Aorta (tissue), 5 donors: ENCODE measurements at regions of chr4 and their contacts with region 1.

Region 1: DNA sequence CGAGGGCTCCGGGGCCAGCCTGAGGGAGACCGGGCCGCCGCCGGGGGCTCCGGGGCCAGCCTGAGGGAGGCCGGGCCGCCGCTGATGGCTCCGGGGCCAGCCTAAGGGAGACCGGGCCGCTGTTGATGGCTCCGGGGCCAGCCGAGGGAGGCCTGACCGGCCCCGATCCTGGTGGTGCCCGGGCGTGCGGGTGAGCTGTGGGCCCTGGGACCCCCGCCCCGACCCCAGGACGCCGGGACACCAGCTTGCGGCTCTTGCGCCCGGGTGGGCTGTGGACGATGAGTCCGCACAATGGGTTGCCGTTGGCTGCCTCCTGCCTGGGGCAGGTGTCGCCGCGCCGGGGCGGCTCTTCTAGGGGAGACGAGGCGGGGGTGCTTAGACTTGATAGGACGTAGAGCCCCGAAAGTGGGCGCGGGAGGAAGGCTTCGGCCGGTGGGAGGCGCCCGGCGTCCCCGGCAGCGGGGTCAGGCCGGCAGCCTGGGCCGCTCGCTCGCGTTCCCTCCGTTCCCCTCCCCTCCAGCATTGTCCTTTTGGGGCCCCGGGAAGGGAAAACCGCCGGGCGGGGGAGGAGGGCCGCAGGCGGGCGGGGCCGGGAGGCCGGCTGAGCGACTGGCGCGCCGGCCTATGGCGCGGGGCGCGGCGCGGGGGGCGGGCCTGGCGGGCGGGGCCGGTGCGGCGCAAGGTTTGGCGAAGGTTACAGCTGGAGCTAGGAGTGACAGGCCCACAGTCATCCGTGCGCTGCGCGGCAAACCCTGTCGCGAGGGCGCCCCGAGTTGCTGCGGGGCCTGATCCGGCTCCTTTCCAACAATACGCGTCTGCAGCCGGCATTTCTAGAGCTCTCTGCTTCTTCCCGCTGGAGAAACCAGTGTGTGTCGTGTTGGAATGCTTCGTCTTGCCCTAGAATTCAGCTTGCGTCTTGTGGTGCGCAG is 790 bp downstream of the KIAA0232 start:
- DNase-seq: peak; percentile 92 to 96
- ATAC-seq: peak; percentile 94
- H3K4me3 ChIP-seq: peak overlapping the region; percentile 90 to 96
- H3K27ac ChIP-seq: peak overlapping the region; percentile 98 to 99
- H3K4me1 ChIP-seq: no peaks in the 10 kb centered on the region
- H3K27me3 ChIP-seq: no peaks in the 10 kb centered on the region

Region 2: DNA sequence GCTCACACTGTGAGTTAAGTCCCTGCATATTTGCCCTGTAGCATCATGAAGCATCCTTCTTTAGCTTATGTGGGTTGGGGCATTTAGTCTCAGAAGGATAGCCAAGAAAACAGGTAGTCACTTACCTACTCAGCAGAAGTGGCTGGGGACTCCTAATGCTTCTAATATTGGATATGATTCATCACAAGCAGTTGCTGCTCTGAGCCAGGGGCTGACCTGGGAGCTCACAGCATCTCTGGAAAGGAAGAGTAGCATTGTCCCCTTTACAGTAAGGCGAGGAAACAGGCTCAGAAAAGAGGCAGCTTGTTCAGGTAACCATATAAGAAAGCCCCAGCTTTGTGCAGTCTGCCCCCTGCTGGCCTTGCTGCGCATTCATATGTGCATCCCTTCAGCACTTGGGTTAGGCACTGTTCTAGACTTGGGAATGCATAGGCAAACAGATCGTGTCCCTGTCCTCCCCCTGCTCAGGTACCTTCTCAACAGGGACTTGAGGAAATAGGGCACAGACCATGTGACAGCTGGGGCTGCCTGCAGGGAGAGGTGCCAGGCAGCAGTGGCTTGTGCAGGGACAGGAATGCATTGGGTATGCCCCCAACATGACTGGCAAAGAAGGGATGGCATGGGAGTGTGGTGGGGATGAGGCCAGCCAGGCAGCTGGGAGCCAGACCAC is 90.6 kb after region 1 on chr4:
- intact Hi-C with region 1: loop called in 1 of 2 experiments (anchors 5 kb)
- DNase-seq: peak; percentile 82 to 90
- ATAC-seq: peak; percentile 77
- H3K4me3 ChIP-seq: no peak overlapping the region
- H3K27ac ChIP-seq: no peak overlapping the region
- H3K4me1 ChIP-seq: no peaks in the 10 kb centered on the region
- H3K27me3 ChIP-seq: no peaks in the 10 kb centered on the region

Region 3: DNA sequence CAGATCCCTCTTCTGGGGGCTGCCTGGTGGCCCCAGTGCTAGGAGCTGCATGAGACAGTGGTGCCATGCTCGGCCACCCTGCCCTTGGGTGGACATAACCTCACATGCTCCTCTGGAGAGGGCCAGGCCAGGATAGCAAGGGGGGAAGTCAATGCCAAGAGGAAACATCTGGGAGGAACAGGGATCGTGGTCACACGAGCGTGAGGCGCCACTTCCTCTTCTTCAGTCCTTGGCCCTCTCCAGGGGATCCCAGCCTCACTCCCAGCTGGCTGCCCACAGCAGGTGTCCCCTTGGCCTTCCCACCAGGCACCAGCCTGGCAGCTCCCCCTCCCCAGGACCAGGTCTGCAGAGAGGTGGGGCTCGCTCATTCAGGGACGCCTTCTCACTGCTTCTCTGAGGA is 154.9 kb after region 1 on chr4:
- intact Hi-C with region 1: no loop called
- DNase-seq: peak in 1 of 2 donors; percentile 88
- ATAC-seq: no peak
- H3K4me3 ChIP-seq: no peak overlapping the region
- H3K27ac ChIP-seq: no peak overlapping the region
- H3K4me1 ChIP-seq: no peaks in the 10 kb centered on the region
- H3K27me3 ChIP-seq: no peaks in the 10 kb centered on the region